ENCODE measurements at regions of chr1 and their contacts with region 1.

Region 1: GRCh38 chr1:18913065-18913835 is 10.9 kb upstream of the ALDH4A1 start:
- DNase-seq: peak; percentile 81
- H3K4me3 Mint-ChIP-seq: no peak overlapping the region
- H3K27ac Mint-ChIP-seq: no peak overlapping the region
- H3K4me1 Mint-ChIP-seq: peaks cover 6% of the 10 kb centered on the region
- H3K27me3 Mint-ChIP-seq: no peaks in the 10 kb centered on the region

Region 2: GRCh38 chr1:18926315-18927081 is 13.2 kb after region 1 on chr1:
- CTCF ChIA-PET with region 1: interaction called, 30 read pairs
- DNase-seq: peak; percentile 91
- H3K4me3 Mint-ChIP-seq: peak overlapping the region; percentile 85
- H3K27ac Mint-ChIP-seq: peak overlapping the region; percentile 100
- H3K4me1 Mint-ChIP-seq: peaks cover 73% of the 10 kb centered on the region
- H3K27me3 Mint-ChIP-seq: no peaks in the 10 kb centered on the region

Region 3: DNA sequence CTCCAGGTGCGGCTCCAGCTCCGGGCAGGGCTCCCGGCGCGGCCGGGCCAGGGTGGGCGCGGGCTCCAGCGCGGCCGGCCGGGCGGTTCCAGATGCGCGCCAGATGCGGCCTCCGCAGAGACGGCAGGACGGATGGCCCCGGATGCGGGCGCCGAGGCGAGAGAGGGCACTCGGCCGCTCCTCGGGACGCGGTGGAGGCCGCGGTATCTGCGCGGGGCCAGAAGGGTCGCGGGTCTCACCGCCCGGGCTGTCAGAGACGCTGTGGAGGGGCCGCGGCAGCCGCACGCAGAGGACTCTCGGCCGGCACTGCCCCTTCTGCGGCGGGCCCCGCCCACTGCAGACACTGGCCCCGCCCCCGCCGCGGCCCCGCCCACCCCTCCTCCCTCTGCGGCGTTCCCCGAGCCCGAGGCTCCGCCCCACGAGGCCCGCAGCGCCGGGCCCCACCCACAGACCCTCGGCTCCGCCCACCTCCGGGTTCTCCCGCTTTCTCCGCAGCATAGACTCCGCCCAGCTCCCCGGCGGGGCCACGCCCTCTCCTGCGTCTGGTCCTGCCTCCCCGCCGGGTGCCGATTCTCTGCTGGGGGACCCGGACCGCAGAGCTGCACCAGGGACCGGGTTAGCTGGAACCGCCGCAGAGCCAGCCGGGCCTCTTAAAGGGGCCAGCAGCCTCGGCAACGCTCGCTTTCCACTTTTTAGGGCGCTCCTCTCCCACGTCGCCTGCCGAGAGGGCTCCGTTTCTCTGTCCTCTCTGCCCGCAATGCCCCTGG is 43.3 kb after region 1 on chr1 and contains the start of gene IFFO2:
- CTCF ChIA-PET with region 1: interaction called, 27 read pairs
- DNase-seq: peak; percentile 98
- H3K4me3 Mint-ChIP-seq: peak within 1 kb of the TSS; percentile 83
- H3K27ac Mint-ChIP-seq: peak within 1 kb of the TSS; percentile 74
- H3K4me1 Mint-ChIP-seq: peaks cover 59% of the 10 kb centered on the region
- H3K27me3 Mint-ChIP-seq: peaks cover 44% of the 10 kb centered on the region

Region 4: DNA sequence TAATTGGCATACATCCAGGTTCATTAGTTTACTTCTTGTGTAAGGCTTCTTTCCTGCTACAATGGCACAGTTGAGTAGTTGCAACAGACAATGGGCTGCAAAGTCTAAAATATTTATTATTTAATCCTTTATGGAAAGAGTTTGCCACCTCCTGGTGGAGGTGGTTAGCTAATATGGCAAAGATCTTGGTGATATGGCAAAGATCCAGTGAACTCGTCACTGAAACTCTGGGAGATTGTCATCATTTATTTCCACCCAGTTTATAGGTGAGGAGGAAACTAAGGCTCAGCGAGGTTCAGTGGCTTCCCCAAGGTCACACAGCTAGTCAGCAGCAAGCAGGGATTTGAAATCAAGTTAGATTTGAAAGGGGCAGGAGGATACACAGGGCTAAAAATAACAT is 59.3 kb after region 1 on chr1:
- CTCF ChIA-PET with region 1: interaction called, 23 read pairs
- DNase-seq: peak; percentile 39
- H3K4me3 Mint-ChIP-seq: no peak overlapping the region
- H3K27ac Mint-ChIP-seq: no peak overlapping the region
- H3K4me1 Mint-ChIP-seq: no peaks in the 10 kb centered on the region
- H3K27me3 Mint-ChIP-seq: peaks cover 42% of the 10 kb centered on the region

Region 5: GRCh38 chr1:19033861-19034680 is 120.8 kb after region 1 on chr1:
- CTCF ChIA-PET with region 1: no interaction called
- DNase-seq: no peak
- H3K4me3 Mint-ChIP-seq: no peak overlapping the region
- H3K27ac Mint-ChIP-seq: no peak overlapping the region
- H3K4me1 Mint-ChIP-seq: no peaks in the 10 kb centered on the region
- H3K27me3 Mint-ChIP-seq: peaks cover 50% of the 10 kb centered on the region

Region 6: DNA sequence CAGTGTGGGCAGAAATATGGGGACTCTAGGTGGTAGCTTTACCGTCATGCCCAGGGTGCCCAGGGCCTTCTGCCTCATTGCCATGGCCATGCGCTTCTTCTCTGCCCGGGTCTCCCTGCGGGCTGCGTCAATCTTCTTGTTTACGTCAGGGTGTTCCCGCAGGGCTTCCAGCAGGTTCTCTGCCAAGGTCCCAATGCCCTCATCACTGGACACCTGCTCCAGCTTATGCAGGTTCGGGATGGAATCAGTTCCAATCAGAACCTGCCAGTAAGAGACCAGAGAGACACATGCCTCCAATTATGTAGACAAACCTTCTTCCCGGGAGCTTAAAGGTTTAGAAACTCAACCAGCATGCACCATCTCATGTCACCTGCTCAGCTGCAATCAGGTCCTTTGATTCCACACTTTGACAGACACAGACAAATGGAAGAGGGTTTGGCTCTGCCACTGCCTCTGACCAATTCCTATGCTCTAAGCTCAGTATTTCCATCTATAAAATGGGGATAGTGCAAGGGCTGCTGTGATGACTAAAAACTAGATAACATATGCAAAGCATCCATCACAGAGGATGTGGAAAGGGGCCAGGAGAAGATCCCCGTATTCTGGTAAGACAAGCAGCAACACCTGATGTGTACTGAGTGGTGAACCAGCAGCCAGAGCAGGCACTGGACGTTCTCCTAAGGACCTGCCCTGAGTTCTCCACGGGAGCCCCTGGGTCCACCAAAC is 175.6 kb after region 1 on chr1:
- CTCF ChIA-PET with region 1: interaction called, 87 read pairs
- DNase-seq: no peak
- H3K4me3 Mint-ChIP-seq: no peak overlapping the region
- H3K27ac Mint-ChIP-seq: peak overlapping the region; percentile 49
- H3K4me1 Mint-ChIP-seq: no peaks in the 10 kb centered on the region
- H3K27me3 Mint-ChIP-seq: no peaks in the 10 kb centered on the region

Measured in activated naive CD4-positive, alpha-beta T cell treated with anti-CD3 and anti-CD28 coated beads, Interleukin-2, amount 10 ng/mL, durations not matched to agents 7 days and 5 days (primary cell).